ENCODE measurements at regions of chr7 and their contacts with region 1.

Region 1: GRCh38 chr7:132318352-132319318 is 257.6 kb downstream of the PLXNA4 start:
- DNase-seq: peak; percentile 87
- H3K4me3 ChIP-seq: peak overlapping the region in 1 of 2 experiments; percentile 7; a peak in 1 of 4 replicates
- H3K27ac ChIP-seq: no peak overlapping the region
- H3K4me1 ChIP-seq: peaks cover 0 to 39% of the 10 kb centered on the region in 2 experiments; a peak in 2 of 4 replicates
- H3K27me3 ChIP-seq: no peaks in the 10 kb centered on the region; the same call in 1 of the 2 replicates
- CTCF ChIP-seq: peak; percentile 99
- EP300 ChIP-seq: 0 out of 4 replicates have a peak, but pooled peaks of 1 of the 2 experiments have one; percentile 23
- RAD21 ChIP-seq: peak; percentile 100

Region 2: DNA sequence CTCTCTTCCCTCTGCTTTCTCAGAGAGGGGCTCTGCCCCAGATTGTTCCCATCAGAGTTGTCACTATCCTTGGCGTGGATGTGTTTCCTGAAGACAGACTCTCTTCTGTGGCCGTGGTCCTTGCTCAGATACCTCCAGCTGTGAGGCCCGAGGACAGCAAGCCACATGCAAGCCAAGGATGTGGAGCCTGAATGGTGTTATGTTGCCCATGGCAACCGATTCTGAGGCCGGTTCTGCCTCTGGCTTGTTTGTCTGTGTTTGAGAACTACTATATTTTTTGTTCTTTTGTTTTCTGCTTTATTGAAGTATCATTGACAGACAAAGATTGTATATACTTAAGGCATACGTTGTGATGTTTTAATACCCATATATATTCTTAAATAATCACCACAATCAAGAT is 514.8 kb before region 1 on chr7:
- CTCF ChIA-PET with region 1: no interaction called
- POLR2A ChIA-PET with region 1: no interaction called
- DNase-seq: no peak
- H3K4me3 ChIP-seq: no peak overlapping the region
- H3K27ac ChIP-seq: no peak overlapping the region
- H3K4me1 ChIP-seq: peaks cover 0 to 17% of the 10 kb centered on the region in 2 experiments; a peak in 2 of 4 replicates
- H3K27me3 ChIP-seq: no peaks in the 10 kb centered on the region
- CTCF ChIP-seq: no peak
- EP300 ChIP-seq: no peak
- RAD21 ChIP-seq: no peak

Region 3: GRCh38 chr7:132290021-132290420 is 28.6 kb before region 1 on chr7:
- CTCF ChIA-PET with region 1: interaction called, 16 read pairs
- POLR2A ChIA-PET with region 1: no interaction called
- DNase-seq: peak; percentile 49
- H3K4me3 ChIP-seq: no peak overlapping the region
- H3K27ac ChIP-seq: peak overlapping the region in 1 of 2 experiments; percentile 29; a peak in 1 of 4 replicates
- H3K4me1 ChIP-seq: peaks cover 14 to 16% of the 10 kb centered on the region in 2 experiments; a peak in 2 of 4 replicates
- H3K27me3 ChIP-seq: no peaks in the 10 kb centered on the region
- CTCF ChIP-seq: no peak
- EP300 ChIP-seq: no peak
- RAD21 ChIP-seq: no peak

Region 4: GRCh38 chr7:132333301-132333700 is 14.7 kb after region 1 on chr7:
- CTCF ChIA-PET with region 1: interaction called, 39 read pairs
- POLR2A ChIA-PET with region 1: no interaction called
- DNase-seq: no peak
- H3K4me3 ChIP-seq: no peak overlapping the region
- H3K27ac ChIP-seq: no peak overlapping the region
- H3K4me1 ChIP-seq: peaks cover 0 to 16% of the 10 kb centered on the region in 2 experiments; a peak in 1 of 4 replicates
- H3K27me3 ChIP-seq: no peaks in the 10 kb centered on the region; the same call in 1 of the 2 replicates
- CTCF ChIP-seq: no peak
- EP300 ChIP-seq: no peak
- RAD21 ChIP-seq: no peak

Region 5: GRCh38 chr7:132394283-132395198 is 75.9 kb after region 1 on chr7:
- CTCF ChIA-PET with region 1: interaction called, 31 read pairs
- POLR2A ChIA-PET with region 1: no interaction called
- DNase-seq: peak; percentile 41
- H3K4me3 ChIP-seq: no peak overlapping the region
- H3K27ac ChIP-seq: peak overlapping the region in 1 of 2 experiments; percentile 14; a peak in 1 of 4 replicates
- H3K4me1 ChIP-seq: peaks cover 0 to 37% of the 10 kb centered on the region in 2 experiments; a peak in 1 of 4 replicates
- H3K27me3 ChIP-seq: no peaks in the 10 kb centered on the region
- CTCF ChIP-seq: peak; percentile 58
- EP300 ChIP-seq: no peak
- RAD21 ChIP-seq: peak; percentile 81

Region 6: DNA sequence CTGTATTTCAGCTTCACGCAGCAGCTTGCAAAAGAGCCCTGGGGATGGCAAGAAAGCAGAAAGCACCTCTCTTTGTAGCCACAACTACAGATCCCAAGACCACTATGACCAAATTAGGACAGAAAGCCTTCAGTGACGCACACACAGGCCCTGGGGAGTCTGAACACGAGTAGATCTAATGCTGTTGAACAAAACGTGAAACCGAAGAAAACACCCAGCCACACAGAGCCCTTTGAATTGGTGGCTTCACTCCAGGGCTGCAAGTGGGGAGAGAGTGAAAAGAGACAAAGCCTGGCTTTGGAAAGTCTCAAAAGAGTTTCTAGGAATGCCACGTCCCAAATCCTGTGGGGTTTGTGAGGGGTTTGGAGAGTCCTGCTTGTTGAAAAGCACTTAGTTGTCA is 229.2 kb after region 1 on chr7:
- CTCF ChIA-PET with region 1: interaction called, 10 read pairs
- POLR2A ChIA-PET with region 1: no interaction called
- DNase-seq: no peak
- H3K4me3 ChIP-seq: no peak overlapping the region
- H3K27ac ChIP-seq: no peak overlapping the region
- H3K4me1 ChIP-seq: peaks cover 0 to 16% of the 10 kb centered on the region in 2 experiments; a peak in 2 of 4 replicates
- H3K27me3 ChIP-seq: no peaks in the 10 kb centered on the region
- CTCF ChIP-seq: no peak
- EP300 ChIP-seq: no peak
- RAD21 ChIP-seq: no peak

Region 7: DNA sequence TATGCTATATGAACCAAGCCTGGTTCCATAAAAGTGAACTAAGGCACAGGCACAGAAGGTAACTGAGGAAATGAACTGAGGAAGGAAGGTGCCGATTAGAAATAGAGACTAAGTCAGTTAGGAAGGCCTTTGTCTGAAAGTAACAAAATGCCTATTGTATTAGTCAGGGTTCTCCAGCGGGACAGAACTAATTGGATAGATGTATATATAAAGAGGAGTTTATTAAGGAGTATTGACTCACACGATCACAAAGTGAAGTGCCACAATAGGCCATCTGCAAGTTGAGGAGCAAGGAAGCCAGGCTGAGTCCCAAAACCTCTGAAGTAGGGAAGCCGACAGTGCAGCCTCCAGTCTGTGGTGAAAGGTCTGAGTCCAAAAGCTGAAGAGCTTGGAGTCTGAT is 271.5 kb after region 1 on chr7:
- CTCF ChIA-PET with region 1: interaction called, 440 read pairs
- POLR2A ChIA-PET with region 1: no interaction called
- DNase-seq: no peak
- H3K4me3 ChIP-seq: no peak overlapping the region
- H3K27ac ChIP-seq: no peak overlapping the region
- H3K4me1 ChIP-seq: peaks cover 0 to 21% of the 10 kb centered on the region in 2 experiments; a peak in 2 of 4 replicates
- H3K27me3 ChIP-seq: peaks cover 14% of the 10 kb centered on the region; the same call in 1 of the 2 replicates
- CTCF ChIP-seq: no peak
- EP300 ChIP-seq: no peak
- RAD21 ChIP-seq: no peak

Measured in SK-N-SH (cell line).